ENCODE measurements at regions of chr4 and their contacts with region 1.

Region 1: GRCh38 chr4:113394730-113395530 is 345.5 kb downstream of the ANK2 start:
- DNase-seq: no peak
- H3K4me3 ChIP-seq: no peak overlapping the region
- H3K27ac ChIP-seq: no peak overlapping the region
- H3K4me1 ChIP-seq: peaks cover 4 to 10% of the 10 kb centered on the region in 2 donors
- H3K27me3 ChIP-seq: no peaks in the 10 kb centered on the region
- CTCF ChIP-seq: peak; percentile 74 to 84 (median 84)

Region 2: GRCh38 chr4:113169368-113169767 is 225.6 kb before region 1 on chr4:
- intact Hi-C with region 1: no loop called
- DNase-seq: no peak
- H3K4me3 ChIP-seq: no peak overlapping the region
- H3K27ac ChIP-seq: no peak overlapping the region
- H3K4me1 ChIP-seq: no peaks in the 10 kb centered on the region
- H3K27me3 ChIP-seq: no peaks in the 10 kb centered on the region
- CTCF ChIP-seq: no peak

Region 3: DNA sequence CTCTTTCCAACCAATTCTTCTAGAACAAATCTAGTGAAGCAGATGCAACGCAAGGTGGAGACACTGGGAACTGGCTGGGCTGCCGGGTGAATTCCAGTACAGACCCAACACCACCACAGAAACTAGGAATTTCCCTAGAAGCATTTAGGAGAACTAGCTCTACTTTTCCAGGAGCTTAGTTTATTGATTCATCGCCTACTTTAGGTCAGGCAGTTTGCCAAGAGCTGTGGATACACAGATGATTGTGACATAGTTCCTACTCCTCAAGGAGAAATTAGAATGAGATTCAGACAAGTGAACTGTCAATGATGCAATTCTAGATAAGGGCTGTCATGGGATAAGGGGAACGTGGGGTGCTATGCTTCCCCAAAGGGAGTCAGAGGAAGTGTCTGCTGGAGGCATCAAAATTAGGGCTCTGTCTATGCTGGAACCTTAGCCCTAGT is 16.6 kb after region 1 on chr4:
- intact Hi-C with region 1: no loop called
- DNase-seq: peak in 1 of 2 donors; percentile 67
- H3K4me3 ChIP-seq: no peak overlapping the region
- H3K27ac ChIP-seq: no peak overlapping the region
- H3K4me1 ChIP-seq: peaks cover 0 to 4% of the 10 kb centered on the region in 2 donors
- H3K27me3 ChIP-seq: no peaks in the 10 kb centered on the region
- CTCF ChIP-seq: no peak

Region 4: GRCh38 chr4:113468165-113469022 is 73.5 kb after region 1 on chr4:
- intact Hi-C with region 1: loop called (anchors 2 kb)
- DNase-seq: peak; percentile 91 to 98
- H3K4me3 ChIP-seq: peak overlapping the region in 1 of 2 donors; percentile 43
- H3K27ac ChIP-seq: peak overlapping the region; percentile 91 to 92
- H3K4me1 ChIP-seq: peaks cover 8 to 20% of the 10 kb centered on the region in 2 donors
- H3K27me3 ChIP-seq: no peaks in the 10 kb centered on the region
- CTCF ChIP-seq: no peak

Region 5: GRCh38 chr4:113684534-113685091 is 289.7 kb after region 1 on chr4:
- intact Hi-C with region 1: loop called (anchors 5 kb)
- DNase-seq: peak; percentile 17 to 85
- H3K4me3 ChIP-seq: no peak overlapping the region
- H3K27ac ChIP-seq: peak overlapping the region; percentile 38 to 90
- H3K4me1 ChIP-seq: peaks cover 16 to 19% of the 10 kb centered on the region in 2 donors
- H3K27me3 ChIP-seq: no peaks in the 10 kb centered on the region
- CTCF ChIP-seq: peak; percentile 45 to 60 (median 55)

Region 6: GRCh38 chr4:113881256-113881655 is 486.3 kb after region 1 on chr4:
- intact Hi-C with region 1: loop called (anchors 5 kb)
- DNase-seq: no peak
- H3K4me3 ChIP-seq: no peak overlapping the region
- H3K27ac ChIP-seq: peak overlapping the region; percentile 57 to 69
- H3K4me1 ChIP-seq: peaks cover 0 to 15% of the 10 kb centered on the region in 2 donors
- H3K27me3 ChIP-seq: no peaks in the 10 kb centered on the region
- CTCF ChIP-seq: no peak

Region 7: GRCh38 chr4:114281164-114281960 is 886.4 kb after region 1 on chr4:
- intact Hi-C with region 1: loop called (anchors 10 kb)
- DNase-seq: no peak
- H3K4me3 ChIP-seq: no peak overlapping the region
- H3K27ac ChIP-seq: peak overlapping the region; percentile 54 to 65
- H3K4me1 ChIP-seq: peaks cover 0 to 12% of the 10 kb centered on the region in 2 donors
- H3K27me3 ChIP-seq: no peaks in the 10 kb centered on the region
- CTCF ChIP-seq: no peak

Measured in ascending aorta (tissue), 2 donors.